PC-9 (cell line): ENCODE measurements at regions of chr2 and their contacts with region 1.

Region 1: GRCh38 chr2:100902833-100903405 is 83.0 kb downstream of the NPAS2 start:
- DNase-seq: peak; percentile 85 to 97
- H3K4me3 ChIP-seq: no peak overlapping the region; the same call in 1 of the 2 replicates
- H3K27ac ChIP-seq: peak overlapping the region; percentile 93
- H3K4me1 ChIP-seq: peaks cover 60% of the 10 kb centered on the region
- H3K27me3 ChIP-seq: no peaks in the 10 kb centered on the region
- CTCF ChIP-seq: no peak

Region 2: DNA sequence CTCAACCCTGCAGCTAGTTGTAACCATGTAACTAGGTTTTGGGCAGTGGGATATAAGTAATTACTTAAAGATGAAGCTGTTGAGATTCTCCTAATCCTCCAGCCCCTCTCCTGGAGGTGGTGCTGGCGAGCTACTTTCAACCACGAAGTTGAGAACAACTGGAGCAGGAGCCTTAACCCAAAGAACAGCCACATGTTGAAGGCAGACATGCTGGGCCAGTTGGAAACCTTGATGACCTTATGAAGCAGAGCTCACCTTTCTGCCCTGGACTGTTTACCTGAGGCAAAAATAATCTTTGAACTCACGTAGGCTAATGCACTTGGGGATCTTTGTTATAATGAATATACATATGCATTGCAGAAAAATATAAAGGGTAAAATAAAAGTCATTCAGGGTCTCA is 172.6 kb before region 1 on chr2:
- CTCF ChIA-PET with region 1: no interaction called
- POLR2A ChIA-PET with region 1: no interaction called
- intact Hi-C with region 1: loop called (anchors 5 kb)
- DNase-seq: peak; percentile 61 to 72
- H3K4me3 ChIP-seq: no peak overlapping the region
- H3K27ac ChIP-seq: no peak overlapping the region
- H3K4me1 ChIP-seq: peaks cover 29% of the 10 kb centered on the region
- H3K27me3 ChIP-seq: no peaks in the 10 kb centered on the region
- CTCF ChIP-seq: peak; percentile 86

Region 3: GRCh38 chr2:100857915-100858314 is 45.0 kb before region 1 on chr2:
- CTCF ChIA-PET with region 1: interaction called, 3 read pairs
- POLR2A ChIA-PET with region 1: interaction called, 5 read pairs
- intact Hi-C with region 1: loop called (anchors 2 kb)
- DNase-seq: peak in 1 of 2 experiments; percentile 76
- H3K4me3 ChIP-seq: no peak overlapping the region
- H3K27ac ChIP-seq: peak overlapping the region; percentile 97
- H3K4me1 ChIP-seq: peaks cover 78% of the 10 kb centered on the region
- H3K27me3 ChIP-seq: no peaks in the 10 kb centered on the region
- CTCF ChIP-seq: no peak

Region 4: GRCh38 chr2:100957996-100958653 is 55.2 kb after region 1 on chr2:
- CTCF ChIA-PET with region 1: no interaction called
- POLR2A ChIA-PET with region 1: interaction called, 6 read pairs
- intact Hi-C with region 1: loop called (anchors 1 kb)
- DNase-seq: peak; percentile 48 to 54
- H3K4me3 ChIP-seq: no peak overlapping the region
- H3K27ac ChIP-seq: peak overlapping the region; percentile 70
- H3K4me1 ChIP-seq: peaks cover 18% of the 10 kb centered on the region; the same call in 1 of the 2 replicates
- H3K27me3 ChIP-seq: no peaks in the 10 kb centered on the region
- CTCF ChIP-seq: no peak

Region 5: GRCh38 chr2:101806123-101806522 is 903.2 kb after region 1 on chr2:
- CTCF ChIA-PET with region 1: no interaction called
- POLR2A ChIA-PET with region 1: no interaction called
- intact Hi-C with region 1: no loop called
- DNase-seq: peak; percentile 70 to 90
- H3K4me3 ChIP-seq: peak overlapping the region; percentile 11; the same call in 1 of the 2 replicates
- H3K27ac ChIP-seq: peak overlapping the region; percentile 80
- H3K4me1 ChIP-seq: peaks cover 68% of the 10 kb centered on the region
- H3K27me3 ChIP-seq: no peaks in the 10 kb centered on the region
- CTCF ChIP-seq: no peak